Activated CD8-positive, alpha-beta T cell treated with anti-CD3 and anti-CD28 coated beads for 36 hours (primary cell): ENCODE measurements at regions of chr1 and their contacts with region 1.

Region 1: DNA sequence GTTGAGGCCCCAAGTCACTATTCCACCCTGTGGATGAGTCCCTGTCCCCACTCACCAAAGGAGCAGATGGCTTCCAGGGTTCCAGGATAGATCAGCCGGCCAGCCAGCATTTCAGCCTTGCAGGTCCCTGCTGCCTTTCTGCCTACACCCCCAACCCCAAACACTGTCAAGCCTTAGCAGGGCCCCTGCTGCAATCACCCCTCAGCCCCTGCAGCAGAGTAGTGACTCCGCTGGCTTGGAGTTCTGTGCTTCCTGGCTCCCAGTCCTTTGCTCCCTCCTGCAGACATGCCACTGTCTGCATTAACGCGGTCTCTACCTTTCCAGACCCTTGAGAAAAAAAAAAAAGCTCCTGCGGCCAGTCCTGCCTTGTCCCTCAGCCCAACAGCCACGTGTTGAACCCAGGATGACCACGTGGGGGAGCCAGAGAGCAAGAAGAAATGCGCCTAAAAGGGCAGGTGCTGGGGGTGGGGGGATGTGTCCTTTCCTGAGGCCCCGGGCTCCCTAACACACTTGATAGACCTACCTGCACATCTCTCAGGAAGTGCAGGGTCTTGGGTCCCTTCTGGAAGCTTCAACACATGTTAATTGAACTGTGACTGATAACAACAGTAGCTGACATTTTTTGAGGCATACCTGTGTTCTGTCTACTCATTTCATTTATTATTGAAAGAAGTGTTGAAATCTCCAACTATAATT is 37.4 kb downstream of the RASSF5 start:
- DNase-seq: peak; percentile 87
- ATAC-seq: peak; percentile 91
- H3K4me3 Mint-ChIP-seq: no peak overlapping the region
- H3K27ac Mint-ChIP-seq: peak overlapping the region; percentile 57
- H3K4me1 Mint-ChIP-seq: peaks cover 25% of the 10 kb centered on the region
- H3K27me3 Mint-ChIP-seq: no peaks in the 10 kb centered on the region
- CTCF ChIP-seq: peak; percentile 94

Region 2: DNA sequence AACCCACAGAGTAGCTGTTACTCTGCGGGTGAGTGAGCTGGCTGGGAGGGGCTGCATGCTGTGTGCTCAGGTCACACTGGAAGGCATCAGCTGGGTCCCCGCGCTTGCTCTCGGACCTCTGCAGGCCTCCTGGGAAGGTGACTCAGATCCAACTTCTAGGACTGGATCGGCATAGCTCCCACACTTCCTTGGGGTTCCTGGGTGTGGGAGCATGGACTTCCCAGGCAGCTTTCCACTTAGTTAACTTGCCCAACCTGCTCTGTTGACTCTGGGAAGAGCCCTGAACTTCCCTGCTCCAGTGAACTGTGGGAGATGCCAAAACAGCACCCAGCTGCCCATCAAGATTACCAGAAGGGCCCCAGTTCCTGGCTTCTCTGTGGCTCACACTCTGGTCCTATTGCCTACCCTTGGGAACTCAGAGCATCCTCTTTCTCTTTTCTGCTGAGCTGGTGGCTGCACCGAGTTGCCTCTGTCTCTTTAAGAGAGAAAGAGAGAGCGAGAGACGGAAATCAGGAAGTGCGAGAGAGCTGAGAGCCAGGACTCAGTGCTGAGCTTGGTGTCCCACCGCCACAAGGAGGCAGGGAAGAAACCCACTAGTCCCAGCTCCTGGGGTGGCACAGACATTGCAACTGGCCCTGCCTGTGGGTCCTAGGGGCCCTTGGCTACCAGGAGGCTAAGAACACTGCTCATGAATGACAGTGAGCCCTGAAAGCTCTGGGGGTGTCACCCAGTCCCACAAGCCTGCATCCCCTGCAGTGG is 74.6 kb before region 1 on chr1 and contains the start of gene IKBKE:
- CTCF ChIA-PET with region 1: interaction called, 15 read pairs
- POLR2A ChIA-PET with region 1: interaction called, 3 read pairs
- intact Hi-C with region 1: no loop called
- DNase-seq: peak; percentile 62
- ATAC-seq: peak; percentile 21
- H3K4me3 Mint-ChIP-seq: peak within 1 kb of the TSS; percentile 73
- H3K27ac Mint-ChIP-seq: peak within 1 kb of the TSS; percentile 94
- H3K4me1 Mint-ChIP-seq: peaks cover 90% of the 10 kb centered on the region
- H3K27me3 Mint-ChIP-seq: no peaks in the 10 kb centered on the region
- CTCF ChIP-seq: no peak
- total RNA-seq, gene IKBKE: 14.3 to 14.9 TPM

Region 3: GRCh38 chr1:206489980-206490770 is 54.5 kb before region 1 on chr1:
- CTCF ChIA-PET with region 1: interaction called, 16 read pairs
- POLR2A ChIA-PET with region 1: no interaction called
- intact Hi-C with region 1: no loop called
- DNase-seq: peak; percentile 84
- ATAC-seq: peak; percentile 98
- H3K4me3 Mint-ChIP-seq: no peak overlapping the region
- H3K27ac Mint-ChIP-seq: peak overlapping the region; percentile 42
- H3K4me1 Mint-ChIP-seq: peaks cover 2% of the 10 kb centered on the region
- H3K27me3 Mint-ChIP-seq: no peaks in the 10 kb centered on the region
- CTCF ChIP-seq: peak; percentile 86

Region 4: GRCh38 chr1:206521694-206522402 is 22.9 kb before region 1 on chr1:
- CTCF ChIA-PET with region 1: interaction called, 13 read pairs
- POLR2A ChIA-PET with region 1: interaction called, 3 read pairs
- intact Hi-C with region 1: no loop called
- DNase-seq: no peak
- ATAC-seq: no peak
- H3K4me3 Mint-ChIP-seq: no peak overlapping the region
- H3K27ac Mint-ChIP-seq: no peak overlapping the region
- H3K4me1 Mint-ChIP-seq: peaks cover 5% of the 10 kb centered on the region
- H3K27me3 Mint-ChIP-seq: no peaks in the 10 kb centered on the region
- CTCF ChIP-seq: no peak

Region 5: DNA sequence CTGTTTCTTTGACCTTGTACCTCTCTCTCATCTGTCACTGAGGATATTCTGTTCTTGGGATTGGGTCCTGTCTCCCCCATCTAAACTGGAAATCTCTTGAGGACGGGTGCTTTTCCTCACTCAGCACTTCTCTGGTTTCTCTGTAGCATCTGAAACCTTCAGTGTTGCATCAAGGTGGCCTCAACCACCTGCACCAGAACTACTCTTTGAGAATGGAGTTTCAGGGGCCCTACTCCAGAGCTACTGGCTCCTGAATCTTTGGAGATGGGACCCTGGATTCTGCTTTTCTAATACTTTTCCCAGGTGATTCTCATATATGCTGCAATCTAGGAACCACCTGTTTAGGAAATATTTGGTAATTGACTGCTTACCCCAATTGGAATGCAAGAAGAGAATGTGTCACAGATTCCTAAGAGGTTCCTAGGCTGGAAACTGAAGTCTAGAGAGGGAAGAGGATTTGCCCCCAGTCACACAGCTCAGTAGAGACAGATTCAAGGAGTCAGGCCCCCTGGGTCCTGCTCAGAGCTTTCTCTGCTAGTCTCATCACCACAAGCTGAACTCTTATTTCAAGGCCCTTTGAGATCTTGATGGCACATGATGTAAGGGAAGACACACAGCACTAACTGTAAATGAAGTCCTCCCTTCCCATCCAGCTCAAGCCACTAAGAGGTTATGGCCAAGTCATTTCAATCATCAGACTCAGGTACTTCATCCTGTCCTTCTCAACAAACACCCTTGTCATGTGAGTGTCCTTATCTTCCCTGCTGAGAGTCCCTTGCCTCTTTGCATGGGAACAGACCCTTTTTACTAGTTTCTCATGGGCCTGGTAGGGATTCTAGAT is 18.9 kb after region 1 on chr1:
- CTCF ChIA-PET with region 1: interaction called, 23 read pairs
- POLR2A ChIA-PET with region 1: interaction called, 1,021 read pairs
- intact Hi-C with region 1: no loop called
- DNase-seq: no peak
- ATAC-seq: no peak
- H3K4me3 Mint-ChIP-seq: peak overlapping the region; percentile 96
- H3K27ac Mint-ChIP-seq: peak overlapping the region; percentile 100
- H3K4me1 Mint-ChIP-seq: peaks cover 82% of the 10 kb centered on the region
- H3K27me3 Mint-ChIP-seq: no peaks in the 10 kb centered on the region
- CTCF ChIP-seq: no peak

Region 6: DNA sequence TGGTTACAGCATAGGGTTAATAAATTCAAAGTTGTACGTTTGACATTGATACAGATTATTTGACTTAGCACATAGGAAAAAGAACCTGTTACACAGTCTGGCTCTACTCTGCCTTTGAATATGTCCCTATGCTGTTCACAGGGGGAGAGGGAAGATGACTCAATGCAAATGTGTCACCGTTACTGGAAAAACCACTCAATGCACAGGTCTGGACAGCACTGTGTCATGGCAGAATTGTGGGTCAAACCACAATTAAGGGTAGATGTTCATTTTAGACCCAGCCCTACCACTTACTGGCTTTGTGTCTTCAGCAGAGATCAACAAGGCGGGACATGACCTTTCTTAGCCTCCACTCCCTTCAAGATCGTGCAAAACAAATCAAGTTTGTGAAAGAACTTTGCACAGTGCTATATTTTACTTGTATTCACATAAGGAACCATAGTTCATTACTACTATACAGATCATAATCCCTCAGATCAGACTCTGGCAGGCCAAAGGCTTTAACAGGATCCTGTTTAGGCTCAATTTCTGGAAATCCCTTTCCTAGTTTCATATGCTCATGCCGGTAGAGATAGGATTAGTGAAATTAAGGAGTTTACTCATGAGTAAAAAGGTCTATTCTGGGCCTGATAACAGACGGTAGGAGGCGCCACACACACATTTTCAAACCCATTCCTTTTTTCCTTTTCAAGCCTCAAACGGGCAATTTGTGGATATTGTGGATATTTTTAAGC is 45.5 kb after region 1 on chr1:
- CTCF ChIA-PET with region 1: interaction called, 583 read pairs
- POLR2A ChIA-PET with region 1: interaction called, 1,021 read pairs
- intact Hi-C with region 1: loop called (anchors 2 kb)
- DNase-seq: peak; percentile 85
- ATAC-seq: peak; percentile 96
- H3K4me3 Mint-ChIP-seq: peak overlapping the region; percentile 55
- H3K27ac Mint-ChIP-seq: peak overlapping the region; percentile 97
- H3K4me1 Mint-ChIP-seq: peaks cover 65% of the 10 kb centered on the region
- H3K27me3 Mint-ChIP-seq: no peaks in the 10 kb centered on the region
- CTCF ChIP-seq: peak; percentile 68

Region 7: GRCh38 chr1:206635080-206635977 is 90.6 kb after region 1 on chr1 and contains the start of gene DYRK3:
- CTCF ChIA-PET with region 1: interaction called, 10 read pairs
- POLR2A ChIA-PET with region 1: interaction called, 3 read pairs
- intact Hi-C with region 1: no loop called
- DNase-seq: peak; percentile 93
- ATAC-seq: peak; percentile 93
- H3K4me3 Mint-ChIP-seq: peak within 1 kb of the TSS; percentile 78
- H3K27ac Mint-ChIP-seq: peak within 1 kb of the TSS; percentile 88
- H3K4me1 Mint-ChIP-seq: peaks cover 25% of the 10 kb centered on the region
- H3K27me3 Mint-ChIP-seq: peaks cover 28% of the 10 kb centered on the region
- CTCF ChIP-seq: no peak
- total RNA-seq, gene DYRK3: 4.7 to 4.9 TPM